Left cardiac atrium (tissue), 4 donors: ENCODE measurements at regions of chrX and their contacts with region 1.

Region 1: GRCh38 chrX:23782863-23783568 is at the start of gene SAT1:
- DNase-seq: peak; percentile 96
- ATAC-seq: peak; percentile 95 to 96
- total RNA-seq, gene SAT1: 291 to 408 TPM

Region 2: GRCh38 chrX:23901805-23902204 is 118.8 kb after region 1 on chrX:
- intact Hi-C with region 1: loop called (anchors 2 to 10 kb)
- DNase-seq: peak; percentile 41
- ATAC-seq: peak; percentile 87 to 92

Region 3: DNA sequence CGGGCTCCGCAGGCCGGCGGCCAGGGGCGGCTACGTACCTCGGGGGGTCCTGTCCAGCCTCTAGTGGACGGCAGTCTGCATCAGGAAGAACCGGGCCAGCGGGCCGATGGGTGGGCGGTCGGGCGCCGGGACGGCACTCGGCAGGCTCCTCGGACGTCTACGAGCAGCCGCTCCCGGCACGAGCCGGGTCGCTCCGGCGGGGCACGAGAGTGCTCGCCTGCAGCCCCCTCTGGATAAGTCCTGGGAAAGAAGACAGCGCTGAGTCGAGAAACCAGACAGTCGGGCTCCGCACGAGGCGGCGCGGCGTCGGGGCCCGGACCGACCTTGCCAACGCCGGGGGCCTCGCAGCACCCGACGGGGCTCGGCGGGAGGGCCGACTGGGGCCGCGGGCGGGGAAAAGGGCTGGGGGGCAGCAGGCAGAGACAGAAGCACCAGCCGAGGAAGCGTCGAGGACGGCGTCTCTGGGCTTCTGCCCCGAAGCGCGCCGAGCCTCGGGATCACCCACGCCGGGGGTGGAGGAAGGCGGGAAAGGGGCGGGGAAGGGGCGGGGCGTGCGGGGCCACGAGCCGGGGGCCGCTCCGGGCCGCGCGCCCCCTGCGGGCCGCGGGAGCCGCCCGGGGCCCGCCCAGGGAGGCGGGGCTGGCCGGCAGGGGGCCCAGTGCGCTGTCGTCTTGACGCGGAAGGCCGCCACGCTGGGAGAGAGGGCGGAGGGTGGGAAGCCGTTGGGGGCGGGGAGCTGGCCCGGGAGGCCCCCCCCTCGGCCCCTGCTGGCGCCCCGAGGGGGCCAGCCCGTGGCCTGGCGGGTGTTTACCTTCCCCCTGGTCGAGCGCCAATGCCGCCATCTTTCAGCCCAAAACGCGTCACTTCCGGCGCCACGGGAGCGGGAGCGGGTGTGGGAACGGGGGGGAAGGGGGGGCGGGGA is 242.1 kb after region 1 on chrX:
- intact Hi-C with region 1: loop called in 1 of 2 experiments (anchors 10 kb)
- DNase-seq: peak; percentile 90
- ATAC-seq: peak; percentile 94 to 96